Psoas muscle (tissue), 8 donors: ENCODE measurements at regions of chr19 and their contacts with region 1.

Region 1: GRCh38 chr19:51904331-51905165 is at the start of gene ZNF649:
- DNase-seq: peak; percentile 87 to 91
- ATAC-seq: peak; percentile 98 to 100 (median 100)
- H3K4me3 ChIP-seq: peak within 1 kb of the TSS; percentile 73
- H3K27ac ChIP-seq: peak within 1 kb of the TSS; percentile 71
- H3K4me1 ChIP-seq: peaks cover 5% of the 10 kb centered on the region
- H3K27me3 ChIP-seq: peaks cover 0 to 6% (median 0%) of the 10 kb centered on the region in 3 donors
- CTCF ChIP-seq: no peak
- total RNA-seq, gene ZNF649: 4.2 to 6.0 (median 4.9) TPM

Region 2: GRCh38 chr19:51926784-51927742 is 22.5 kb after region 1 on chr19 and contains the start of gene ZNF613:
- intact Hi-C with region 1: loop called in 1 of 2 experiments (anchors 2 kb)
- DNase-seq: peak; percentile 86 to 91
- ATAC-seq: peak; percentile 99
- H3K4me3 ChIP-seq: peak within 1 kb of the TSS; percentile 82
- H3K27ac ChIP-seq: peak within 1 kb of the TSS; percentile 88
- H3K4me1 ChIP-seq: no peaks in the 10 kb centered on the region
- H3K27me3 ChIP-seq: no peaks in the 10 kb centered on the region
- CTCF ChIP-seq: peak; percentile 23
- total RNA-seq, gene ZNF613: 1.7 to 3.6 (median 2.3) TPM